Common myeloid progenitor, CD34-positive (primary cell): ENCODE measurements at regions of chrX and their contacts with region 1.

Region 1: DNA sequence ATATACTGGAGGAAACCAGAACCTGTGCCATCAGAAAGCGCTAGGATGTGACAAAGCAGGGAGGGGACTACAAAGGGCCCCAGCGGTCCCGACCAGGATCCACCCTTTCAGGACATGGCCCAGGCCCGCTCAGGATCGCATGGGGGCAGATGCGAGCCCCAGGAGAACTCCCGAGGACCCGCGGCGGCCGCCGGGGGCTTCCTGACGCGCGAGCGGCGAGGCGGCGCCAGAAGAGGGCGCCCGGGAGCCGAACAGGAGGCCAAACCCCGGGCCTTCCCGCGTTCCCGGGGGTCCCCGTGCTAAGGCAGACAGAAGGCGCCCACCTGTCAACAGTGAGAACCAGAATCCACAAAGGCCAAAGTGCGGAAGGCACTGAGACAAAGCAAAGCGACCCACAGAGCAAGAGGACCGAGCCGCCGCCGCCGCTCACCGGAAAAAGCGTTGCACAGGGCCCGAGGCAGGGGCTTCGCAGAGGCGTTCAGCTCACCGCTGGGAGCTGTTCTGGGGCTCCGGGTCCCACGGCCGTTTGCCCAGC is 7.3 kb upstream of the OPN1LW start:
- DNase-seq: peak; percentile 75 to 86 (median 85)
- H3K4me3 ChIP-seq: peak overlapping the region in 2 of 7 experiments; percentile 39 to 50
- H3K27ac ChIP-seq: no peak overlapping the region
- H3K4me1 ChIP-seq: peaks cover 0 to 11% (median 3%) of the 10 kb centered on the region in 4 experiments
- H3K27me3 ChIP-seq: peaks cover 0 to 11% (median 0%) of the 10 kb centered on the region in 5 experiments

Region 2: GRCh38 chrX:154304846-154305245 is 168.2 kb after region 1 on chrX:
- CTCF ChIA-PET with region 1: interaction called, 12 read pairs
- POLR2A ChIA-PET with region 1: no interaction called
- DNase-seq: no peak
- H3K4me3 ChIP-seq: no peak overlapping the region
- H3K27ac ChIP-seq: no peak overlapping the region
- H3K4me1 ChIP-seq: peaks cover 0 to 6% (median 1%) of the 10 kb centered on the region in 4 experiments
- H3K27me3 ChIP-seq: peaks cover 0 to 6% (median 0%) of the 10 kb centered on the region in 5 experiments